ENCODE measurements at regions of chr18 and their contacts with region 1.

Region 1: GRCh38 chr18:62877411-62878221 is 162.3 kb downstream of the PHLPP1 start:
- DNase-seq: no peak
- H3K4me3 ChIP-seq: peak overlapping the region in 1 of 4 donors; percentile 2
- H3K27ac ChIP-seq: peak overlapping the region; percentile 33 to 57 (median 46)
- H3K4me1 ChIP-seq: peaks cover 28 to 42% (median 35%) of the 10 kb centered on the region in 4 donors
- H3K27me3 ChIP-seq: no peaks in the 10 kb centered on the region
- CTCF ChIP-seq: peak in 1 of 3 experiments; percentile 19
- EP300 ChIP-seq: no peak
- POLR2A ChIP-seq: no peak

Region 2: GRCh38 chr18:62721839-62722795 is 155.5 kb before region 1 on chr18:
- intact Hi-C with region 1: loop called (anchors 5 kb)
- DNase-seq: no peak
- H3K4me3 ChIP-seq: no peak overlapping the region
- H3K27ac ChIP-seq: no peak overlapping the region
- H3K4me1 ChIP-seq: peaks cover 4 to 81% (median 69%) of the 10 kb centered on the region in 4 donors
- H3K27me3 ChIP-seq: no peaks in the 10 kb centered on the region
- CTCF ChIP-seq: no peak
- EP300 ChIP-seq: no peak
- POLR2A ChIP-seq: no peak

Region 3: DNA sequence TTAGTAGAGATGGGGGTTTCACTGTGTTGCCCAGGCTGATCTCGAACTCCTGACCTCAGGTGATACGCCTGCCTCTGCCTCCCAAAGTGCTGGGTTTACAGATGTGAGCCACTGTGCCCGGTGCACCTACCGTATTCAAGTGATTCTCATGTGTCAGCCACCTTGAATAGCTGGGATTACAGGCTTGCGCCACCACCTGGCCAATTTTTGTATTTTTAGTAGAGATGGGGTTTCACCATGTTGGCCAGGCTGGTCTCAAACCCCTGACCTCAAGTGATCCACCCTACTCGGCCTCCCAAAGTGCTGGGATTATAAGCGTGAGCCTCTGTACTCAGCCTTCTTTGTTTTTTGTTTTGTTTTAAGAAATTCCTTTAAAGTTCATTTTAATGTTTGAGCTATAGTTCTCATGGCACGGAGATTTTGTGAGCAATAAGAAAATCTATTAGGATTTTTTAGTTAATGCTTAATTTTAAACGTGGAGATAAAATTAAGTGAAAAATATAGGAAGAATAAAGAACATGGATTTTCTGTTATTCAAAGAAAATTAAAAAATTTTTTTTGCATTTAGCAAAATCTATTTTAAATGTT is 80.4 kb after region 1 on chr18:
- intact Hi-C with region 1: loop called (anchors 10 kb)
- DNase-seq: no peak
- H3K4me3 ChIP-seq: no peak overlapping the region
- H3K27ac ChIP-seq: no peak overlapping the region
- H3K4me1 ChIP-seq: peaks cover 0 to 6% (median 3%) of the 10 kb centered on the region in 4 donors
- H3K27me3 ChIP-seq: no peaks in the 10 kb centered on the region
- CTCF ChIP-seq: peak; percentile 33 to 49 (median 40)
- EP300 ChIP-seq: no peak
- POLR2A ChIP-seq: no peak

Measured in esophagus muscularis mucosa (tissue), 4 donors.